Activated T-helper 1 cell treated with anti-CD3 and anti-CD28 coated beads, Interleukin-12 subunit alpha, Interleukin-12 subunit beta, Interleukin-2, Interleukin-4 antibody, amounts not matched to agents 30 ng/mL and 10 ng/mL and 1 ng/mL, durations not matched to agents 14 hours and 24 hours and 36 hours (primary cell): ENCODE measurements at regions of chr7 and their contacts with region 1.

Region 1: DNA sequence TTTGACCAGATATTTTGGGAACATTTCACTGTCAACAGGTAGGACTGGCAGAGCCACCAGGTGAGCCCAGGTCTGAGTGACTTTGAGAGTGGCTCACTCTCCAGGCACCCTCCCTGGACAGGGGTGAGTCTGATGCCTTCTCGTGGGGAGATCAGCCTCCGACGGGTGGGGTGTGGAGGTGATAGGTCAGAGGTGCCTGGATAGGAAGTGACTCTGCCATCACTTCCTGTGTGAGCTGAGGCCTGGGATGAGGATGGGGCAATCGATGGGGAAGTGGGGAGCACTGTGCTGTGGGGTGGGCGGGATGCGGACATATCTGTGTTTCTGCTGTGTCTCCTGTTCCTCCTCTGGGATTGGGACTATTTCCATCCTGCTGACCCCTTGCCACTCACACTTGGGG is 34.6 kb downstream of the IFT22 start:
- DNase-seq: no peak
- H3K4me3 Mint-ChIP-seq: no peak overlapping the region
- H3K27ac Mint-ChIP-seq: no peak overlapping the region
- H3K4me1 Mint-ChIP-seq: peaks cover 21% of the 10 kb centered on the region
- H3K27me3 Mint-ChIP-seq: peaks cover 24% of the 10 kb centered on the region

Region 2: GRCh38 chr7:100889761-100890634 is 397.0 kb before region 1 on chr7:
- intact Hi-C with region 1: loop called (anchors 10 kb)
- DNase-seq: peak; percentile 91
- H3K4me3 Mint-ChIP-seq: peak overlapping the region; percentile 82
- H3K27ac Mint-ChIP-seq: peak overlapping the region; percentile 67
- H3K4me1 Mint-ChIP-seq: peaks cover 42% of the 10 kb centered on the region
- H3K27me3 Mint-ChIP-seq: peaks cover 23% of the 10 kb centered on the region

Region 3: GRCh38 chr7:101085162-101085987 is 201.7 kb before region 1 on chr7 and contains the start of gene TRIM56:
- intact Hi-C with region 1: loop called (anchors 2 kb)
- DNase-seq: peak; percentile 76
- H3K4me3 Mint-ChIP-seq: peak within 1 kb of the TSS; percentile 98
- H3K27ac Mint-ChIP-seq: peak within 1 kb of the TSS; percentile 98
- H3K4me1 Mint-ChIP-seq: peaks cover 31% of the 10 kb centered on the region
- H3K27me3 Mint-ChIP-seq: no peaks in the 10 kb centered on the region
- total RNA-seq, gene TRIM56: 41.2 and 45.7 TPM in 2 replicates

Region 4: DNA sequence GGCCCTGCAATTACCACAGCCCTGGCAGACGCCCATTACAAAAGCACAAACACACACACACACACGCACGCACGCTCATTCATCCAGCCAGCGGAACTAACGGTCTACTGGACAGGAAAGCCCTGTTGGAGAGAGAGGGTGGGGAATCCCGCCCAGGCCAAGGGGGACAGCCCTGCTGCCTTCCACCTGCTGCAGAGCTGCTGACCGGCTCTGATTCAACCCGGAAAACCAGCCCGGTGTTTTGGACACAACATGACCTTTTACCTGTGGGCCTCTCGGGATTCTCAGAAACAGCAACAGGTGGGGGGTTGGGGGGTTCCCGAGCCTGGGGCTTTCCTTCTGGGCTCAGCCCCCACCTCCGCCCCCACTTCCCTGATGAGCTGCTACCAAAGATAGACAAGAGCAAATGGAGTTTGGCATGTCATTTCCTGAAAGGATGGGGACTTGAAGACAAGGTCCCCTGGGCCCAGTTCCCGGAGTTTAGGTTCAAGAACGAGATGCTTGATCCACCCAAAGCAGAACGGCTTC is 178.6 kb before region 1 on chr7:
- intact Hi-C with region 1: no loop called
- DNase-seq: no peak
- H3K4me3 Mint-ChIP-seq: no peak overlapping the region
- H3K27ac Mint-ChIP-seq: no peak overlapping the region
- H3K4me1 Mint-ChIP-seq: no peaks in the 10 kb centered on the region
- H3K27me3 Mint-ChIP-seq: peaks cover 4% of the 10 kb centered on the region

Region 5: DNA sequence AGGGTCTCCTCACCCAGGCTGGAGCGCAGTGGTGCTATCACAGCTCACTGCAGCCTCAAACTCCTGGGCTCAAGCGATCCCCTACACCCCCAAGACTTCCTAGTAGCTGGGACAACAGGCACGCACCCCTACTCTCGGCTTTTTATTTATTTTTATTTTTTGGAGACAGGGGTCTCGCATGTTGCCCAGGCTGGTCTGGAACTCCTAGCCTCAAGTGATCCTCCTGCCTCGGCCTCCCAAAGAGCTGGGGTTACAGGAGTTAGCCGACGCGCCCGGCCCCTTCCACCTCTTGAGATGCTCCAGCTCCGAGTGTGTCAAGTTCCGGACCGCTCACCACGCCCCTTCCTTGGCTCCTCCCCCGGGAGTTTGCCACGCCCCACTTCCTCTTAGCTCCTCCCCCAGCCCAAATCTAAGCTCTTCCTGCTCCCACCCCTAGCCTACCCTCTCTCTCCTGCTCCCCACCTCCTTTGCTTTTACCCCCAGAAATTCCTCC is 113.2 kb before region 1 on chr7:
- intact Hi-C with region 1: no loop called
- DNase-seq: peak; percentile 69
- H3K4me3 Mint-ChIP-seq: peak overlapping the region; percentile 65
- H3K27ac Mint-ChIP-seq: no peak overlapping the region
- H3K4me1 Mint-ChIP-seq: peaks cover 40% of the 10 kb centered on the region
- H3K27me3 Mint-ChIP-seq: peaks cover 85% of the 10 kb centered on the region

Region 6: DNA sequence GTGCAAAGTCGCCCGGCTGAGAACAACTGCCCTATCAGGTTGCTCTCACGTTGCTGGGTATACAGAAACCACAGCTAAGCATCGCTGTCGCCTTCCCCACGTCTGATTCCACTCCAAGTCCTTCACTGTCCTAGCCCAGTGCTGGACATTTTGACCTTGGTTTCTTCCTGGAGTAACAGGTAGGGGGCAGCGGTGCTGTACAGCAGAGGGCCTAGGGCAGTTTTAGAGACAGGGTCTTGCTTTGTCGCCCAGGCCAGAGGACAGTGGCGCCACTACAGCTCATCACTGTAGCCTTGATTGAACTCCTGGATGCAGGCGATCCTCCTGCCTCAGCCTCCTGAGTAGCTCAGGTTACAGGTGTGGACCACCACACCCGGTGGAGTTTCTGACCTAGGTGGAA is 52.0 kb before region 1 on chr7:
- intact Hi-C with region 1: loop called (anchors 2 kb)
- DNase-seq: no peak
- H3K4me3 Mint-ChIP-seq: no peak overlapping the region
- H3K27ac Mint-ChIP-seq: no peak overlapping the region
- H3K4me1 Mint-ChIP-seq: no peaks in the 10 kb centered on the region
- H3K27me3 Mint-ChIP-seq: no peaks in the 10 kb centered on the region

Region 7: GRCh38 chr7:101244375-101245146 is 42.5 kb before region 1 on chr7 and contains the start of gene FIS1:
- intact Hi-C with region 1: loop called (anchors 1 kb)
- DNase-seq: peak; percentile 91
- H3K4me3 Mint-ChIP-seq: peak within 1 kb of the TSS; percentile 94
- H3K27ac Mint-ChIP-seq: peak within 1 kb of the TSS; percentile 98
- H3K4me1 Mint-ChIP-seq: peaks cover 24% of the 10 kb centered on the region
- H3K27me3 Mint-ChIP-seq: no peaks in the 10 kb centered on the region
- total RNA-seq, gene FIS1: 138 and 143 TPM in 2 replicates

Region 8: GRCh38 chr7:101251871-101252659 is 35.0 kb before region 1 on chr7:
- intact Hi-C with region 1: loop called (anchors 2 kb)
- DNase-seq: peak; percentile 98
- H3K4me3 Mint-ChIP-seq: peak overlapping the region; percentile 98
- H3K27ac Mint-ChIP-seq: peak overlapping the region; percentile 98
- H3K4me1 Mint-ChIP-seq: peaks cover 30% of the 10 kb centered on the region
- H3K27me3 Mint-ChIP-seq: peaks cover 5% of the 10 kb centered on the region